Posterior vena cava (tissue), 2 donors: ENCODE measurements at regions of chr5 and their contacts with region 1.

Region 1: DNA sequence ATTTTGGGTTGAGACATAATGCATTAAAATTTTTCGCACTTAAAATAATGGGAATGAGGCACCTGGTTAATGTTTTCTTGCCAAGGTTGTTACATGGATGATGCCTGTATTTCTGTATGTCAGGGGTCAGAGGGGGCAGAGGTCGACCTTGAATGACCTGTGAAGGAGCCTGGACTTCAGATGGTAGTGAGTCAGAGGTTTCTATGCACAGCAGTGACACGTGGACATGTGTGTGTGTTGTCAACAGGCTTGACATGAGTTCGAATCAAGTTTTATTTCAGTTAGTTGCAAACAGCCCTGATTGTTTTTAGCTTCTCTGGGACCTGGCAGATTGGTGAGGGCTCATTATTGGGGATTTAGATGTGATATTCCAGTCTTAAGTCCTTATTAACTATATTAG is 3.6 kb downstream of the IL5 start:
- DNase-seq: no peak

Region 2: GRCh38 chr5:133926489-133927299 is 1387.0 kb after region 1 on chr5:
- intact Hi-C with region 1: loop called in 1 of 2 experiments (anchors 5 kb)
- DNase-seq: no peak